Left cardiac atrium (tissue), 4 donors: ENCODE measurements at regions of chr6 and their contacts with region 1.

Region 1: GRCh38 chr6:2111162-2111677 is 134.2 kb downstream of the GMDS start:
- DNase-seq: no peak
- ATAC-seq: peak; percentile 57 to 80

Region 2: DNA sequence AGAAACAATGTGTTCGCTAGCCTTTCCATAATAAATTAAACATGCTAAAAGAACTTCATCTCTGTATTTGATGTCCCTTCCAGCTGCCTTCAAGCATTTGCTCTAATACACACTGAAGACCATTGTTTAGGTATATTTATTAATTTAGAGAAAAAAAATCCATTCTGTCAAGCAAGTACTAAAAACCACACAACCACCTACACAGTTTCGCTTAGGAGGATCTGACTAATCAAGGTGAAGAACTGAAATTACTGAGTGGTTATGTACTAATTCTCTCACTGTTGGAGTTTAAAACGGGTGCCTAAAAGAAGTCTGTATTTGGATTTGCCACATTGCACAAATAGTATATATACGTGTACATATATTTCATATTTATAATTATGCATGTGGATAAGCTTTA is 75.3 kb after region 1 on chr6:
- intact Hi-C with region 1: loop called in 1 of 2 experiments (anchors 5 kb)
- DNase-seq: no peak
- ATAC-seq: no peak